ENCODE measurements at regions of chr1 and their contacts with region 1.

Region 1: DNA sequence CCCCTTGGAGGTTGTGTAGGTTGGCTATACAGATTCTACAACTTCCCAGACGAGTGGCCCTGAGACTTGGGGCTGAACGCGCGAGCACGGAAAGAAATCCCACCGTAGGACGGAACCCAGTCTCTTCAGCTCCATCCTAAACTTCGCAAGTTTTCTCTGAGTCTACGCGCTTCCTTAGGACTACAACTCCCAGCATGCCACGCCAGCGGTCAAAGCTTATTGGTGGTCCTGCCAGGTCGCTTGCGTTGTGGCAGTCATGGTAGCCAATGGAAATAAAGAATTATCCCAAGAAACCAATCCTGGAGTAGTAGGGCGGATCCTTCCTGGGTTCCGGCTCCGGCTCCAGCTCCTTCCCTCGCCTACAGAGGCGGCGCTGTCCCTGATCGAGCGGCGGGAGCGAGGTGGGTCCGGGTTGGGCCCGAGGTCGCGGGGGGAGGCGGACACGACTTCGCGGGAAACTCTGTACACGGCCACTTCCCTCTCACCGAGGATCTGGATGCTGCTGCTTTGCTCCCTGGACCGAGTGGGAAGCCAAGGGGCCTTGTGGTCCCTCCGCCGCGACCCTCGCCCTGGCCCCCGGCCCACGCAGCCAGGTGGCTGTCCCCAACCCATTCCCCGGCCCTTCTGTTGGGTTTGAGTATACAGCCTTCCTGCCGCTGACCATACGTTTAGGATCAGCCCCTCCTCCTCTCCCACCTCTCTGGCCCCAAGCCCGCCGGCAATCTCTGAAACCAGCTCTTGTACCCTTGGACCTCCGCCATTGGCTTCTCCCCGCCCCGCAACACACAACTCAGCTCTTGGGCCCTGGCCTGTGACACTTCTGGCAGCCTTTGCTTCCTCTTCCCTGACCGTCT is at the start of gene ZNF691:
- DNase-seq: peak; percentile 87 to 97
- H3K4me3 ChIP-seq: peak within 1 kb of the TSS; percentile 81 to 82
- H3K27ac ChIP-seq: peak within 1 kb of the TSS; percentile 58 to 82
- H3K4me1 ChIP-seq: peaks cover 0 to 14% of the 10 kb centered on the region in 2 donors
- H3K27me3 ChIP-seq: no peaks in the 10 kb centered on the region
- CTCF ChIP-seq: peak; percentile 15 to 62 (median 54)
- total RNA-seq, gene ZNF691: 14.7 TPM

Region 2: GRCh38 chr1:42456010-42456758 is 390.3 kb before region 1 on chr1 and contains the starts of genes PPCS and ZMYND12:
- intact Hi-C with region 1: loop called (anchors 10 kb)
- DNase-seq: peak; percentile 59 to 92
- H3K4me3 ChIP-seq: peak within 1 kb of the TSS; percentile 81 to 89
- H3K27ac ChIP-seq: peak within 1 kb of the TSS; percentile 84 to 88
- H3K4me1 ChIP-seq: peaks cover 0 to 12% of the 10 kb centered on the region in 2 donors
- H3K27me3 ChIP-seq: no peaks in the 10 kb centered on the region
- CTCF ChIP-seq: peak in 1 of 3 experiments; percentile 14
- total RNA-seq, gene PPCS: 13.6 TPM
- total RNA-seq, gene ZMYND12: not detected

Region 3: GRCh38 chr1:42681741-42682483 is 164.6 kb before region 1 on chr1 and contains the start of gene YBX1:
- intact Hi-C with region 1: loop called (anchors 1 kb)
- DNase-seq: peak; percentile 93 to 98
- H3K4me3 ChIP-seq: peak within 1 kb of the TSS; percentile 96
- H3K27ac ChIP-seq: peak within 1 kb of the TSS; percentile 84 to 95
- H3K4me1 ChIP-seq: peaks cover 9 to 40% of the 10 kb centered on the region in 2 donors
- H3K27me3 ChIP-seq: no peaks in the 10 kb centered on the region
- CTCF ChIP-seq: no peak
- total RNA-seq, gene YBX1: 356 TPM

Region 4: DNA sequence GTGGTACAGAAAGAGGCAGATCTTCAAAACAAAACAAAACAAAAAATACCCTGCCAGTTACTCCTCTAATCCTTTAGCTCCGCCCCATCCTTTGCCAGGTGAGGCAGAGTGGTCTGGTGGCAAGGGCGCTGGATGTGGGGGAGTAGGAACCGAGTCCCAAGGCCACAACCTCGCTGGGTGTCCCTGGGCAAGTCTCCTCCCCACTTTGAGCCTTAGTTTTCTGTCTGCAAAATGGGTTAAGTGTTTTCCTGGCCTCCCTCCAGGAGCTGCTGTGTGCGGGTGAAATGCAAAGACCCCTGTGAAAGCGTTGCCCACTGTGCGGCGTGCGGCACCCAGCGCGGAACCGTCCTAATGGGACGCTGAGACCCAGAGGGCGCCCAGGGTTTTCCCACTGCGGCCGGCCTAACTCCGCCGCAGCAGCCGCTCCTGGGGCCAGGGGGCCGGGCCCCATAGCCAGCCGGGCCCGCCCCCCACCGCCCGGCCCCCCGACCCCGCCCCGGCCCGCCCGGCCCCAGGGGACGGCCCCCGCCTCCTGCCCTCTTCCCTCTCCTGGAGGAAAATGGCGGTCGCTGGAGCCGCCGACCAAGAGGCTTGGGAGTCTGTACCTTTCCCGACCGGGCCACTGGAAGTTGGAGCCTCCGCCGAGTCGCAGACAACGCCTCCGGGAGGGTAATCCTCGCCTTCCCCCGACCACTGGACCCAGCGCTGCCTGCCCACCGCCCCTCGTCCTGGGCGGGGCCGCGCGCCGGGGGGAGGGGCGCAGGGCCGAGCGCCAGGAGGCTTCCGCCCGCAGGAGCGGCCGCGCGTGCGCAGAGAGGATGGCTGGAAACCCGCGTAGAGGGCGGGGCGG is 29.7 kb before region 1 on chr1 and contains the starts of genes ERMAP and SVBP:
- intact Hi-C with region 1: loop called (anchors 1 kb)
- DNase-seq: peak; percentile 63 to 94
- H3K4me3 ChIP-seq: peak within 1 kb of the TSS; percentile 81 to 88
- H3K27ac ChIP-seq: peak within 1 kb of the TSS; percentile 96 to 99
- H3K4me1 ChIP-seq: peaks cover 4 to 9% of the 10 kb centered on the region in 2 donors
- H3K27me3 ChIP-seq: no peaks in the 10 kb centered on the region
- CTCF ChIP-seq: no peak
- total RNA-seq, gene ERMAP: 0.11 TPM
- total RNA-seq, gene SVBP: 1.2 TPM

Region 5: GRCh38 chr1:43073490-43074230 is 227.2 kb after region 1 on chr1:
- intact Hi-C with region 1: loop called (anchors 5 kb)
- DNase-seq: peak in 1 of 2 donors; percentile 84
- H3K4me3 ChIP-seq: no peak overlapping the region
- H3K27ac ChIP-seq: no peak overlapping the region
- H3K4me1 ChIP-seq: peaks cover 0 to 1% of the 10 kb centered on the region in 2 donors
- H3K27me3 ChIP-seq: no peaks in the 10 kb centered on the region
- CTCF ChIP-seq: peak; percentile 78 to 88 (median 87)

Region 6: DNA sequence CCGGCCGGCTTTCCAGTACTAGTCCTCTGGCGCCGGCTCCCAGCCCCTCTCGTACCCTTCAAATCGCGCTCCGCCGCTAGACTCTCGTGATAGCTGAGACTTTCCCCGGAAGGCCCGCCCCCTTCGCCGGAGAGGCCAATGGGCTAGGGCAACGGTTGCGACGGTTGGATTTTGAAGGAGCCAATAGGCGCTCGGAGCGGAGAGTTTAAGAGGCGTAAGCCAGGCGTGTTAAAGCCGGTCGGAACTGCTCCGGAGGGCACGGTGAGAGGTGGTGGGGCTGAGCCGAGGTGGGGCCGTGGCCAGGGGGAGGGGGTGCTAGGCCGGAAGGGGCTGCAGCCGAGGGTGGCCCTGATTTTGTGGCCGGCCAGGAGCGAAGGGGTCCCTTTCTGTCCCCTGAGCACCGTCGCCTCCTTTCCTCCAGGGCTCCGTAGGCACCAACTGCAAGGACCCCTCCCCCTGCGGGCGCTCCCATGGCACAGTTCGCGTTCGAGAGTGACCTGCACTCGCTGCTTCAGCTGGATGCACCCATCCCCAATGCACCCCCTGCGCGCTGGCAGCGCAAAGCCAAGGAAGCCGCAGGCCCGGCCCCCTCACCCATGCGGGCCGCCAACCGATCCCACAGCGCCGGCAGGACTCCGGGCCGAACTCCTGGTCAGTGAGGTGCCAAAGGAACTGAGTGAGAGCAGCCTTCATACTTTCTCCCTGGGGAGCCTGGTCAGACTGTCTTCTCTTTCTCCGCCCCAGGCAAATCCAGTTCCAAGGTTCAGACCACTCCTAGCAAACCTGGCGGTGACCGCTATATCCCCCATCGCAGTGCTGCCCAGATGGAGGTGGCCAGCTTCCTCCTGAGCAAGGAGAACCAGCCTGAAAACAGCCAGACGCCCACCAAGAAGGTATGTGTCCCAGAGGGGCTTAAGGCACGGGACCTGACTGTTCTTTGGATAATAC is 512.5 kb after region 1 on chr1 and contains the start of gene CDC20:
- intact Hi-C with region 1: loop called (anchors 10 kb)
- DNase-seq: peak; percentile 96 to 100
- H3K4me3 ChIP-seq: peak within 1 kb of the TSS; percentile 63 to 67
- H3K27ac ChIP-seq: peak within 1 kb of the TSS; percentile 84 to 86
- H3K4me1 ChIP-seq: peaks cover 6 to 7% of the 10 kb centered on the region in 2 donors
- H3K27me3 ChIP-seq: no peaks in the 10 kb centered on the region
- CTCF ChIP-seq: no peak
- total RNA-seq, gene CDC20: not detected